Transverse colon (tissue), 4 donors: ENCODE measurements at regions of chr2 and their contacts with region 1.

Region 1: GRCh38 chr2:197799068-197799467 is 5.3 kb upstream of the PLCL1 start:
- DNase-seq: no peak
- H3K4me3 ChIP-seq: no peak overlapping the region
- H3K27ac ChIP-seq: no peak overlapping the region
- H3K4me1 ChIP-seq: peaks cover 5 to 13% (median 6%) of the 10 kb centered on the region in 4 donors
- H3K27me3 ChIP-seq: peaks cover 27% of the 10 kb centered on the region
- CTCF ChIP-seq: no peak
- EP300 ChIP-seq: no peak
- POLR2A ChIP-seq: no peak

Region 2: DNA sequence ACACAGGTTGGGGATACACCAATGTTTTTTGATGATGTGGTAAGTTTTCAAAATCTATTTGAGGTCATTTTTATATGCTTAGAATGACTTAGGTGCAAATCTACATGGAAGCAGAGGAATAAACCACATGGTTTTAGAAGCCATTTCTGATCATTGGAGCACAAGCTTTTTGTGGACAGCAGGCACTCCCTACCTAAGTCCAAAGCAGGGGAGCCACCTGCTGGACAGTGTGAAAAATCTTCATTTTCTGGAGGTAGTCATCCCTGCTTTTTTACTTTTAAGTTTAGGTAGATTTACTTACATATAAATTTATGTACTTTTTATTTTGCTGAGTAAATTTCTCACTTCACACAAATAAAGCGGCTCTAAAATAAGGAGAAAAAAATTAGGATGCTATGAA is 328.6 kb after region 1 on chr2:
- in situ Hi-C with region 1: loop called (anchors 10 to 25 kb)
- intact Hi-C with region 1: loop called (anchors 5 kb)
- DNase-seq: peak; percentile 17
- H3K4me3 ChIP-seq: no peak overlapping the region
- H3K27ac ChIP-seq: no peak overlapping the region
- H3K4me1 ChIP-seq: no peaks in the 10 kb centered on the region
- H3K27me3 ChIP-seq: no peaks in the 10 kb centered on the region
- CTCF ChIP-seq: peak; percentile 48 to 56 (median 54)
- EP300 ChIP-seq: no peak
- POLR2A ChIP-seq: no peak

Region 3: DNA sequence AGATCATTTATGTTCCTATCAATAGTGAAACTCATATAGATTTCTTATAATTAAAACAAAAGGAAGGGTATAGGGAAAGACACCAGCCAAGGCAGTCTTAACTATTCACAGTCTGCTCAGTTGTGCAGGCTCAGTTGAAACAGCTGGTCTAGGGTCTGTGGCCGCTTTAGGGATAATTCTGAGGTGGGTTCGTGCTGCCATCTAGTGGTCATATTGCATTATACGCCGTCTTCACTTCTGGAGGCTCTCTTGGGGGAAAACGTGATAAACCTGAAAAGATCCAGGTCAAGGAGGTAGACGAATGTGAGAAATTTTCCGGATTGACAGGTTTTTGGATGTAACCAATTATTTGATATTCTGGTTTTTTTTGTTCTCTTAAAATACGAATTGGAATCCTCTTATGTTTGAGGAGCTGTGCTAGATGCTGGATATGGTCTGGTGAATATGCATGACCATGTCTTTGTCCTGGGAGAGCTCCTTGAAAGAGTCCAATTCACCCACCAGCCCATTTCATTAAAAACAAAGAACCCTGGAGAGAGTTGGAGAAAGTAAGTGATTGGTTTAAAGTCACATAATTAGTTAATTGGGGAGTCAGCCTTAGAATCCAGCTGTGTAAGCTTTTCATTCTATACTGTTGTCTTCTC is 497.7 kb after region 1 on chr2:
- in situ Hi-C with region 1: loop called in 3 of 4 experiments (anchors 10 kb)
- intact Hi-C with region 1: loop called (anchors 5 kb)
- DNase-seq: peak; percentile 40
- H3K4me3 ChIP-seq: no peak overlapping the region
- H3K27ac ChIP-seq: no peak overlapping the region
- H3K4me1 ChIP-seq: no peaks in the 10 kb centered on the region
- H3K27me3 ChIP-seq: peaks cover 5% of the 10 kb centered on the region
- CTCF ChIP-seq: peak; percentile 71 to 84 (median 80)
- EP300 ChIP-seq: no peak
- POLR2A ChIP-seq: no peak